Activated T-helper 1 cell treated with anti-CD3 and anti-CD28 coated beads, Interleukin-12 subunit alpha, Interleukin-12 subunit beta, Interleukin-2, Interleukin-4 antibody, amounts not matched to agents 30 ng/mL and 10 ng/mL and 1 ng/mL, durations not matched to agents 14 hours and 24 hours and 36 hours (primary cell): ENCODE measurements at regions of chr7 and their contacts with region 1.

Region 1: DNA sequence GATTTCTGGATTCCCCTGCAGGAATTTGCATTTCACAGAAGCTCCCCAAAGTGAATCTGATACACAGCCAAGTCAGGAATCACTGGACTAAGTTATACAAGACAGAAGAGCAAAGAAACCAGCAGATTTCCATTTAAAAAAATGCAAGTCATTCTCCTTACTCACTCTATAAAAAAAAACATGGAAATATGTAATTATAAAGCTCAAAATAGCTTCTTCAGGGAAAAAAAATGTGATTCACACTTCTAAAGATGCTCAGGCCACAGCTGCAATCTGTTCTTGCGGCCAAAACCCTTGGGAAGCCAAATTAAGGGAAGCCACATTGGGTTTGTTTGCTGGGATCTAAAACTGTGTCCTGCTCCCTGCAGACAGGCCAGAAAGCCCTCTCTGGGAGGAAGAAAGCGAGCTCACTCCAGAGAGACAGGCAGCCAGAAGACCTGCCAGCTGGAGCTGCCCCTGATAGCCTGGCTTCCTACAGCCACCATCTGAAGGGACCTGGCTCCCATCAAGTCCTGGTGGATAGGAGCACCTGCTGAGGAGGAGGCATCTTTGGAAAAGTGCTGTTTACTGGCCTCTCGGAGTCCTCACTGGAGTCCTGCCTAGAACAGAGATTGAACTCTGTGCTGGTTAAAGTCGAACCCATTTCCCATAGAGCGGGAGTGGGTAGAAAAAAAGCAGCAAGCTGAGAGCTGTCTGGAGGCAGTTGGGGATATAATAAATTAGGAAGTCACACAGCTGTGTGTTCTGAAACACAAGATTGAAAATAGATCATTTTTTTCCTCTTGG is 359.2 kb upstream of the AOAH start:
- DNase-seq: no peak
- H3K4me3 Mint-ChIP-seq: no peak overlapping the region
- H3K27ac Mint-ChIP-seq: no peak overlapping the region
- H3K4me1 Mint-ChIP-seq: peaks cover 56% of the 10 kb centered on the region
- H3K27me3 Mint-ChIP-seq: no peaks in the 10 kb centered on the region

Region 2: GRCh38 chr7:36765605-36766004 is 317.9 kb before region 1 on chr7:
- intact Hi-C with region 1: no loop called
- DNase-seq: no peak
- H3K4me3 Mint-ChIP-seq: no peak overlapping the region
- H3K27ac Mint-ChIP-seq: no peak overlapping the region
- H3K4me1 Mint-ChIP-seq: peaks cover 44% of the 10 kb centered on the region
- H3K27me3 Mint-ChIP-seq: peaks cover 6% of the 10 kb centered on the region

Region 3: GRCh38 chr7:36986429-36987362 is 96.8 kb before region 1 on chr7:
- intact Hi-C with region 1: loop called (anchors 1 kb)
- DNase-seq: peak; percentile 40
- H3K4me3 Mint-ChIP-seq: no peak overlapping the region
- H3K27ac Mint-ChIP-seq: no peak overlapping the region
- H3K4me1 Mint-ChIP-seq: peaks cover 36% of the 10 kb centered on the region
- H3K27me3 Mint-ChIP-seq: no peaks in the 10 kb centered on the region